Transverse colon (tissue), 4 donors: ENCODE measurements at regions of chr12 and their contacts with region 1.

Region 1: GRCh38 chr12:67943226-67943892 is 45.9 kb upstream of the IFNG-AS1 start:
- DNase-seq: peak; percentile 72
- H3K4me3 ChIP-seq: no peak overlapping the region
- H3K27ac ChIP-seq: peak overlapping the region in 2 of 4 donors; percentile 5 to 9
- H3K4me1 ChIP-seq: peaks cover 7 to 25% (median 16%) of the 10 kb centered on the region in 4 donors
- H3K27me3 ChIP-seq: no peaks in the 10 kb centered on the region
- CTCF ChIP-seq: peak; percentile 74 to 85 (median 79)
- EP300 ChIP-seq: no peak
- POLR2A ChIP-seq: no peak

Region 2: GRCh38 chr12:67426067-67426466 is 517.3 kb before region 1 on chr12:
- in situ Hi-C with region 1: loop called in 2 of 4 experiments (anchors 25 kb)
- intact Hi-C with region 1: loop called (anchors 10 kb)
- DNase-seq: no peak
- H3K4me3 ChIP-seq: no peak overlapping the region
- H3K27ac ChIP-seq: peak overlapping the region; percentile 75 to 84 (median 78)
- H3K4me1 ChIP-seq: peaks cover 0 to 72% (median 33%) of the 10 kb centered on the region in 4 donors
- H3K27me3 ChIP-seq: no peaks in the 10 kb centered on the region
- CTCF ChIP-seq: no peak
- EP300 ChIP-seq: no peak
- POLR2A ChIP-seq: no peak

Region 3: GRCh38 chr12:67441736-67442346 is 501.5 kb before region 1 on chr12:
- in situ Hi-C with region 1: loop called in 3 of 4 experiments (anchors 10 to 25 kb)
- intact Hi-C with region 1: no loop called
- DNase-seq: peak; percentile 93
- H3K4me3 ChIP-seq: no peak overlapping the region
- H3K27ac ChIP-seq: peak overlapping the region; percentile 5 to 33 (median 10)
- H3K4me1 ChIP-seq: peaks cover 8 to 20% (median 9%) of the 10 kb centered on the region in 4 donors
- H3K27me3 ChIP-seq: no peaks in the 10 kb centered on the region
- CTCF ChIP-seq: peak; percentile 84 to 92 (median 85)
- EP300 ChIP-seq: no peak
- POLR2A ChIP-seq: no peak